HCT116 (cell line): ENCODE measurements at regions of chr11 and their contacts with region 1.

Region 1: GRCh38 chr11:45771566-45772448 is 33.1 kb upstream of the SLC35C1 start:
- DNase-seq: peak; percentile 56
- ATAC-seq: peak; percentile 94
- H3K4me3 ChIP-seq: peak overlapping the region; percentile 41 to 63
- H3K27ac ChIP-seq: no peak overlapping the region
- H3K4me1 ChIP-seq: peaks cover 0 to 7% of the 10 kb centered on the region in 2 experiments; a peak in 1 of 4 replicates
- H3K27me3 ChIP-seq: no peaks in the 10 kb centered on the region; the same call in 1 of the 2 replicates
- CTCF ChIP-seq: peak; percentile 88 to 95 (median 93)
- POLR2A ChIP-seq: peak; percentile 21
- RAD21 ChIP-seq: peak; percentile 93

Region 2: DNA sequence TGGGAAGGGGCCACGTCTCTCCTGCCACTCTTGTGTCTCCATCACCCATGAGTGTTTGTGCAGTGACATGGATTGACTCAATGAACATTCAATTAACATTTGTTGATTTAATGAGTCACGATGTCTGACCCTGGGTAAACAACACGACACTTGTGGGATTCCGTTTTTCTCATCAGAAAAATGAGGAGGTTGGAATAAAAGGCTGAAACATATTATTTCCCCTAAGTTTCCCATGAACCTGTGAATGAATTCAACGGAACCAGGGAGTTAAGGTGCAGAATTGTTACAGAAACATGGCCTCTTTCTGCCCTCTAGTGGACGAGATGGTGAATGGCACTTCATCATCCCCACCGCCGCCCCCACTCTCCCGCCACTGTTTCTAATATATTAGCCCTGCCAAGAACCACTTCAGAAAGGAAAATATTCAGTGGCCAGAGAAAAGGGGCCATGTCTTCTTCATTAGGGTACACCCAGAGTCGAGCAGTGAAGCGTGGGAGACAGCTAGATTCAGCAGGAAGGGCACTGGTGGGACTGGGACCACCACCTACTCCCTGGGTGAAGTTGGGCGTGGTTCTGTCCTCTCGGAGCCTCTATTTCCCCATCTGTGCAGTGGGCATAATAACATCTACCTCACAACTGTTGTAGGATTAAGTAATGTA is 439.4 kb before region 1 on chr11:
- CTCF ChIA-PET with region 1: interaction called, 81 read pairs
- POLR2A ChIA-PET with region 1: no interaction called
- RAD21 ChIA-PET with region 1: interaction called in 1 of 2 experiments, 3 read pairs
- intact Hi-C with region 1: no loop called
- DNase-seq: peak; percentile 29
- ATAC-seq: peak; percentile 75
- H3K4me3 ChIP-seq: no peak overlapping the region
- H3K27ac ChIP-seq: no peak overlapping the region
- H3K4me1 ChIP-seq: peaks cover 6 to 16% of the 10 kb centered on the region in 2 experiments; a peak in 3 of 4 replicates
- H3K27me3 ChIP-seq: no peaks in the 10 kb centered on the region
- CTCF ChIP-seq: peak; percentile 45 to 60 (median 56); a peak in 5 of 6 replicates
- POLR2A ChIP-seq: no peak
- RAD21 ChIP-seq: peak; percentile 75

Region 3: DNA sequence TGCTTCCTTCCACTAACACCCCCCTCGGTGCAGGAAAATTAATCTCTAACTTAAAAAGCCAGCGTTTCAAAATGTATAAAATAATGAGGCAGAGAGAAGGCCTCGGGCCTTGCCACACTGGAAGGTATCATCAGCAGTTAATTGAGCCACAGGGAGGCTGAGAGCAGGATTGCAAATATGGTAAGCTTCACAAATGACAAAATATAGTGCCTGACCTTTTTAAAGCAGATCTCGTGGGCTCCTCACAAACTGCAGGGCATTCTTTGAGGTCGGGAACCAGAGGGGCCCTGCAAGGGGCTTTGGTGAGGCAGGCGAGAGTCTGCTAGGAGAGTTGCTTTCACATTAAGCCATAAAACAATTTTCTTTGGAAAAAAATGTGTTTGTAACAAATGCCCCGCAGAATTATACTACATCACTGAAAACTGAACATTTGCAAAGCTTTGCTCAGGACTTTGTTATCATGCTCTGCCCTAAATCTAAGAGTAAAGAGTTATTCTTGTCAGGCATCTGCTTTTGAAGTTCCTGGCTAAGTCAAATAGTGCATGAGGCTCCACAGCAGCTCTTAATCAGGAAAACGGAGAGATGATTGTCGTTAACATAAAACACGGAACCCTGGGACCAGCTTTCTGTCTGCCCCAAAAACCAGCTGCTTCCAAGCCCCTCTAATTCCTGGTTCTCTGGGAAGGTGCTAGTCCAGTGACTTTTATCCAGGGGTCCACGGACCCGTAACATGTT is 424.3 kb before region 1 on chr11:
- CTCF ChIA-PET with region 1: interaction called, 81 read pairs
- POLR2A ChIA-PET with region 1: no interaction called
- RAD21 ChIA-PET with region 1: no interaction called
- intact Hi-C with region 1: no loop called
- DNase-seq: no peak
- ATAC-seq: no peak
- H3K4me3 ChIP-seq: no peak overlapping the region
- H3K27ac ChIP-seq: no peak overlapping the region
- H3K4me1 ChIP-seq: no peaks in the 10 kb centered on the region
- H3K27me3 ChIP-seq: peaks cover 52% of the 10 kb centered on the region
- CTCF ChIP-seq: no peak
- POLR2A ChIP-seq: no peak
- RAD21 ChIP-seq: no peak

Region 4: DNA sequence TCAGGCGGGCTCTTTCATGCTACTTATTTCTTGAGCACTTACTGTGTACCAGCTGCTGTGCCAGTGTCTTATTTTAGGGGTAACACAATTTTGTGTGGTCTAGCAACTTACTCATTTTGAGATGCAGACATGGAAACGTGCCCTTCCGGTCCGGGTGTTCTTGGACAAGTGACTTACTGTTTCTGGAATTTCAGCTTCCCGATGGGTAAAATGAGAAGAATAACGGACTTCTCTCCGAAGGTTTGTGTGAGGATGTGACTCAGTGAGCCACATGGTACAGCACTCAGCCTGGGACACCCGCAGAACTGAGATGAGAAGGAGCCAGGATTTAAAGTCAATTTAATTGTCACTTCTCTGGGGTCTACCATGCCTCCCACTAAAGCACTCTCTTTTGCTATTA is 371.2 kb before region 1 on chr11:
- CTCF ChIA-PET with region 1: interaction called, 13 read pairs
- POLR2A ChIA-PET with region 1: no interaction called
- RAD21 ChIA-PET with region 1: no interaction called
- intact Hi-C with region 1: no loop called
- DNase-seq: no peak
- ATAC-seq: no peak
- H3K4me3 ChIP-seq: no peak overlapping the region
- H3K27ac ChIP-seq: no peak overlapping the region
- H3K4me1 ChIP-seq: no peaks in the 10 kb centered on the region
- H3K27me3 ChIP-seq: peaks cover 45% of the 10 kb centered on the region
- CTCF ChIP-seq: no peak
- POLR2A ChIP-seq: no peak
- RAD21 ChIP-seq: no peak

Region 5: DNA sequence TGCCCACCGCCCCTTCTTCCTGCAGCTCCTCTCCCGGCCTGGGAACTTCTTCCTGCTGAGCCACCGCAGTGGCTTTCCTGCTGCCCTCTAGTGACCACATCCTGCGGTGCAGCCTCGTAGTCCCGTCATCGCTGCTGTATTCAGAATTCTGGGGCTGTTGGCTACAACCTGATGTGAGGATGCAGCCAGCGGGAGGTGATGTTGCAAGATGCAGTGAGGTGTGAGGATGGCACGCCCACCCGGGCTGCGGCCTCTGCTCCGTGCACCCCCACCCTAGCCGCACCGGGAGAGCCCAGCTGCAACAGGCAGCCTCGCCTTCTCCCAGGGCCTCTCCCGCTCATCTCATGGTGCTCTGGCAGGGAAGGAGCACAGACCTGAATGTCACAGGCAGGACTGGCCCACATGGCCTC is 116.5 kb before region 1 on chr11:
- CTCF ChIA-PET with region 1: interaction called, 14 read pairs
- POLR2A ChIA-PET with region 1: no interaction called
- RAD21 ChIA-PET with region 1: no interaction called
- intact Hi-C with region 1: no loop called
- DNase-seq: peak; percentile 53
- ATAC-seq: peak; percentile 94
- H3K4me3 ChIP-seq: no peak overlapping the region
- H3K27ac ChIP-seq: no peak overlapping the region
- H3K4me1 ChIP-seq: peaks cover 0 to 3% of the 10 kb centered on the region in 2 experiments; a peak in 1 of 4 replicates
- H3K27me3 ChIP-seq: no peaks in the 10 kb centered on the region
- CTCF ChIP-seq: peak; percentile 73 to 98 (median 90)
- POLR2A ChIP-seq: no peak
- RAD21 ChIP-seq: peak; percentile 75

Region 6: GRCh38 chr11:45761659-45762058 is 10.1 kb before region 1 on chr11:
- CTCF ChIA-PET with region 1: interaction called, 12 read pairs
- POLR2A ChIA-PET with region 1: no interaction called
- RAD21 ChIA-PET with region 1: no interaction called
- intact Hi-C with region 1: no loop called
- DNase-seq: no peak
- ATAC-seq: no peak
- H3K4me3 ChIP-seq: no peak overlapping the region
- H3K27ac ChIP-seq: no peak overlapping the region
- H3K4me1 ChIP-seq: no peaks in the 10 kb centered on the region
- H3K27me3 ChIP-seq: no peaks in the 10 kb centered on the region; the same call in 1 of the 2 replicates
- CTCF ChIP-seq: no peak
- POLR2A ChIP-seq: no peak
- RAD21 ChIP-seq: no peak